Sciatic nerve (tissue), 2 donors: ENCODE measurements at regions of chr3 and their contacts with region 1.

Region 1: GRCh38 chr3:50542177-50543034 is 25.1 kb downstream of the C3orf18 start:
- DNase-seq: peak; percentile 84
- ATAC-seq: peak; percentile 83

Region 2: GRCh38 chr3:50347194-50347918 is 195.1 kb before region 1 on chr3:
- intact Hi-C with region 1: loop called (anchors 5 kb)
- DNase-seq: peak; percentile 86
- ATAC-seq: no peak

Region 3: GRCh38 chr3:50436114-50436674 is 106.2 kb before region 1 on chr3:
- intact Hi-C with region 1: loop called (anchors 5 kb)
- DNase-seq: peak; percentile 74
- ATAC-seq: peak; percentile 80

Region 4: GRCh38 chr3:50568947-50569749 is 26.7 kb after region 1 on chr3 and contains the start of gene HEMK1:
- intact Hi-C with region 1: no loop called
- DNase-seq: peak; percentile 99
- ATAC-seq: peak; percentile 94
- total RNA-seq, gene HEMK1: 21.3 TPM